ENCODE measurements at regions of chr1 and their contacts with region 1.

Region 1: DNA sequence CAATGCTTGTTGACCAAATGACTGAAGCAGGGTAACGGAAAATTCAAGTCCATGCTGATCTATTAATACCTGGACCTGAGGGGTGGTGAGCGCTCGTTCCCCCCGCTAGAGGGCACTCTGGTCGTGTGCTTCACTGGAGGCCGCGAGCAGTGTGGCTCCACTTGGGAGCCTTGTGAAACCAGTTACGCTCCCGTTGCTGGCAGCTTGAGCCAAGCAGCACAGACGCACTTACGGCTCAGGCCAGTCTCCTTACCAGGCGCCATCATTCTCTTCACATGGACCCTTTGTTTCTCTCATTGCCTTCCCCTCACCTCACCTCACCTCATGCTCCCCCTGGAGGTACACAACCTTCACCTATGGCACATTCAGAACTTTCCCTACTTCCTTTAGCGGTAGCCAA is 49.7 kb upstream of the TSPAN2 start:
- DNase-seq: peak; percentile 51
- H3K4me3 ChIP-seq: no peak overlapping the region
- H3K27me3 ChIP-seq: no peaks in the 10 kb centered on the region
- CTCF ChIP-seq: peak; percentile 92

Region 2: GRCh38 chr1:114892194-114892918 is 246.6 kb before region 1 on chr1:
- CTCF ChIA-PET with region 1: no interaction called
- POLR2A ChIA-PET with region 1: no interaction called
- DNase-seq: no peak
- H3K4me3 ChIP-seq: no peak overlapping the region
- H3K27me3 ChIP-seq: peaks cover 4% of the 10 kb centered on the region; the same call in 1 of the 2 replicates
- CTCF ChIP-seq: no peak

Region 3: GRCh38 chr1:115184951-115185331 is 46.0 kb after region 1 on chr1:
- CTCF ChIA-PET with region 1: interaction called, 16 read pairs
- POLR2A ChIA-PET with region 1: no interaction called
- DNase-seq: no peak
- H3K4me3 ChIP-seq: no peak overlapping the region
- H3K27me3 ChIP-seq: no peaks in the 10 kb centered on the region
- CTCF ChIP-seq: no peak

Region 4: GRCh38 chr1:115314766-115315165 is 175.8 kb after region 1 on chr1:
- CTCF ChIA-PET with region 1: interaction called, 21 read pairs
- POLR2A ChIA-PET with region 1: no interaction called
- DNase-seq: peak; percentile 65
- H3K4me3 ChIP-seq: no peak overlapping the region
- H3K27me3 ChIP-seq: no peaks in the 10 kb centered on the region
- CTCF ChIP-seq: no peak

Region 5: GRCh38 chr1:115337633-115338456 is 198.9 kb after region 1 on chr1 and contains the start of gene NGF:
- CTCF ChIA-PET with region 1: interaction called, 18 read pairs
- POLR2A ChIA-PET with region 1: no interaction called
- DNase-seq: no peak
- H3K4me3 ChIP-seq: peak within 1 kb of the TSS; percentile 97
- H3K27me3 ChIP-seq: no peaks in the 10 kb centered on the region
- CTCF ChIP-seq: no peak; the same call in 1 of the 2 replicates
- polyA plus RNA-seq, gene NGF: 42.4 and 49.6 TPM in 2 replicates

Region 6: GRCh38 chr1:115469703-115470476 is 330.9 kb after region 1 on chr1:
- CTCF ChIA-PET with region 1: interaction called, 170 read pairs
- POLR2A ChIA-PET with region 1: no interaction called
- DNase-seq: no peak
- H3K4me3 ChIP-seq: no peak overlapping the region
- H3K27me3 ChIP-seq: no peaks in the 10 kb centered on the region
- CTCF ChIP-seq: peak; percentile 98

Region 7: DNA sequence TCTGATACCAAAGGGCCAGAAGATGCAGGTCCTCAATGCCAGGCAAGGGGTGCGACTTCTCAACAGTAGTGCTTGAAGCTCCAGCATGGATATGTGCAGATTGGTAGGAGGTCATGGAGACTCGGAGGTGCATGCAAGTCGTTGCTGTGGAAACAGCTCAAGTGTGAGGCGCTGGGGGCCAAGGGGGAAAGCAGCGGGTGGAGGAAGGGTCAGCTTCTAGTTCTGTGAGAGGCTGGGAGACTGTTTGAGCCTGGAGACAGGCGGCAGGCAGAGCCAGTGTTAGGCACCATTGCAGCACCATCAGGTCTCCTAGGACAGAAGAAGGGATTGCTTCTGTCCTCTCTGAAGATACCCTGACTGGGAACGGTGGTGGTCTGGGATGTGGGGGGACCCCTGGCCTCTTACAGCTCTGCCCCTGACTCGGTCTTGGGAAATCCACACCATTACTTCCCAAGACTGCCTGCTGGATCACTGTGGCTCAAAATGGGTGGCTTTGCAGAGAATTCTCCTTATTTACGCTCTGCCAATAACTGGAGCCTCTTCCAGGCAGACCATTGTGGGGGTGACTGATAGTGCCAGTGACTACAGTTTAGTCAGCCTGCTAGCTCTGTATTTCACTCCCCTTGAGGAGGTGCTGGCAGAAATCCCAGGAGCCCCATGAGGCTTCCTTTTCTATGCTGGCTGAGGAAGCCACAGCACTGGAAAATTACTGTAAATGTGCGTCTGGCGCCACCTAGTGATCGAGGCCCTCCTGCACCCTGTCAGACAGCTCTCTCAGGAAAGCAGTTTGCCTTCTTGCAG is 456.5 kb after region 1 on chr1:
- CTCF ChIA-PET with region 1: interaction called, 90 read pairs
- POLR2A ChIA-PET with region 1: no interaction called
- DNase-seq: peak; percentile 63
- H3K4me3 ChIP-seq: no peak overlapping the region
- H3K27me3 ChIP-seq: no peaks in the 10 kb centered on the region
- CTCF ChIP-seq: peak; percentile 96

Measured in BJ (cell line).